ENCODE measurements at regions of chr19 and their contacts with region 1.

Region 1: GRCh38 chr19:36378625-36379509 is at the start of gene ZFP14:
- DNase-seq: peak; percentile 97
- ATAC-seq: peak; percentile 98
- H3K4me3 ChIP-seq: peak within 1 kb of the TSS; percentile 79 to 95 (median 85)
- H3K4me3 Mint-ChIP-seq: peak within 1 kb of the TSS; percentile 82
- H3K27ac ChIP-seq: peak within 1 kb of the TSS; percentile 83 to 94
- H3K27ac Mint-ChIP-seq: peak within 1 kb of the TSS; percentile 97
- H3K4me1 ChIP-seq: peaks cover 13 to 19% of the 10 kb centered on the region in 2 donors
- H3K4me1 Mint-ChIP-seq: peaks cover 19% of the 10 kb centered on the region
- H3K27me3 ChIP-seq: no peaks in the 10 kb centered on the region
- H3K27me3 Mint-ChIP-seq: no peaks in the 10 kb centered on the region
- CTCF ChIP-seq: peak; percentile 66
- total RNA-seq, gene ZFP14: 22.4 and 22.7 TPM in 2 replicates

Region 2: DNA sequence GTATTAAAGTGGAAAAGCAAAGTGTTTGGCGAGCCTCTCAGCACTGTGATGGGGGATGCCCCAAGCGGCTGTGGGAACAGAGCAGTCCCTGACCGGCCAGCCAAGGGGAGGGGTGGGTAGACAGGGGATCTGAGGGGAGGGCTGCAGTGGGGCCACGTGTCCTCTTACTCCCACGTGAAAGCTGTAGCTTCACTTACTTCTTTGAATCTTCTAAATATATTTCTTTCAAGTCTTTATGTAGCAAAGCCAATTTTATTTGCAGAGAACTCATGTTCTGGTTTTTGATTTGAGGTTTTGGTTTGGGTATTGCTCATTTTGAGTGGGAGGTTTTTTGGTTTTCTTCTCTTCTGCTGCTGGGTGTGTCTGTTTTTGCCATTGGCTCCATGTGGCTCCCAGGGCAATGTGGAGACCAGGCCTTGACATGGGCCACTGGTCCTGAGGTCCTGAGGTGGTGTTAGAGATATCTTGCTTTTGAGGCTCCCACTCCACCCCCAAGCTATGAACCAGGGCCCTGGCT is 285.7 kb before region 1 on chr19:
- CTCF ChIA-PET with region 1: no interaction called
- POLR2A ChIA-PET with region 1: no interaction called
- intact Hi-C with region 1: no loop called
- DNase-seq: no peak
- ATAC-seq: no peak
- H3K4me3 ChIP-seq: no peak overlapping the region
- H3K4me3 Mint-ChIP-seq: no peak overlapping the region
- H3K27ac ChIP-seq: no peak overlapping the region
- H3K27ac Mint-ChIP-seq: no peak overlapping the region
- H3K4me1 ChIP-seq: no peaks in the 10 kb centered on the region
- H3K4me1 Mint-ChIP-seq: no peaks in the 10 kb centered on the region
- H3K27me3 ChIP-seq: no peaks in the 10 kb centered on the region
- H3K27me3 Mint-ChIP-seq: no peaks in the 10 kb centered on the region
- CTCF ChIP-seq: no peak

Region 3: GRCh38 chr19:36214386-36215275 is 164.2 kb before region 1 on chr19 and contains the starts of genes ZNF146 and ZNF565:
- CTCF ChIA-PET with region 1: no interaction called
- POLR2A ChIA-PET with region 1: no interaction called
- intact Hi-C with region 1: loop called (anchors 1 kb)
- DNase-seq: peak; percentile 98
- ATAC-seq: peak; percentile 89
- H3K4me3 ChIP-seq: peak within 1 kb of the TSS; percentile 70 to 99 (median 85)
- H3K4me3 Mint-ChIP-seq: no peak within 1 kb of the TSS
- H3K27ac ChIP-seq: peak within 1 kb of the TSS; percentile 87 to 97
- H3K27ac Mint-ChIP-seq: peak within 1 kb of the TSS; percentile 41
- H3K4me1 ChIP-seq: peaks cover 13 to 21% of the 10 kb centered on the region in 2 donors
- H3K4me1 Mint-ChIP-seq: peaks cover 19% of the 10 kb centered on the region
- H3K27me3 ChIP-seq: no peaks in the 10 kb centered on the region
- H3K27me3 Mint-ChIP-seq: no peaks in the 10 kb centered on the region
- CTCF ChIP-seq: no peak
- total RNA-seq, gene ZNF146: 62.2 and 69.3 TPM in 2 replicates
- total RNA-seq, gene ZNF565: 5.2 and 5.5 TPM in 2 replicates

Region 4: GRCh38 chr19:36401475-36401874 is 22.6 kb after region 1 on chr19:
- CTCF ChIA-PET with region 1: interaction called, 3 read pairs
- POLR2A ChIA-PET with region 1: interaction called, 4 read pairs
- intact Hi-C with region 1: loop called (anchors 1 kb)
- DNase-seq: peak; percentile 74
- ATAC-seq: peak; percentile 90
- H3K4me3 ChIP-seq: peak overlapping the region; percentile 7 to 49 (median 42)
- H3K4me3 Mint-ChIP-seq: peak overlapping the region; percentile 75
- H3K27ac ChIP-seq: peak overlapping the region; percentile 63 to 80
- H3K27ac Mint-ChIP-seq: peak overlapping the region; percentile 81
- H3K4me1 ChIP-seq: peaks cover 19 to 20% of the 10 kb centered on the region in 2 donors
- H3K4me1 Mint-ChIP-seq: peaks cover 16% of the 10 kb centered on the region
- H3K27me3 ChIP-seq: no peaks in the 10 kb centered on the region
- H3K27me3 Mint-ChIP-seq: no peaks in the 10 kb centered on the region
- CTCF ChIP-seq: no peak

Region 5: DNA sequence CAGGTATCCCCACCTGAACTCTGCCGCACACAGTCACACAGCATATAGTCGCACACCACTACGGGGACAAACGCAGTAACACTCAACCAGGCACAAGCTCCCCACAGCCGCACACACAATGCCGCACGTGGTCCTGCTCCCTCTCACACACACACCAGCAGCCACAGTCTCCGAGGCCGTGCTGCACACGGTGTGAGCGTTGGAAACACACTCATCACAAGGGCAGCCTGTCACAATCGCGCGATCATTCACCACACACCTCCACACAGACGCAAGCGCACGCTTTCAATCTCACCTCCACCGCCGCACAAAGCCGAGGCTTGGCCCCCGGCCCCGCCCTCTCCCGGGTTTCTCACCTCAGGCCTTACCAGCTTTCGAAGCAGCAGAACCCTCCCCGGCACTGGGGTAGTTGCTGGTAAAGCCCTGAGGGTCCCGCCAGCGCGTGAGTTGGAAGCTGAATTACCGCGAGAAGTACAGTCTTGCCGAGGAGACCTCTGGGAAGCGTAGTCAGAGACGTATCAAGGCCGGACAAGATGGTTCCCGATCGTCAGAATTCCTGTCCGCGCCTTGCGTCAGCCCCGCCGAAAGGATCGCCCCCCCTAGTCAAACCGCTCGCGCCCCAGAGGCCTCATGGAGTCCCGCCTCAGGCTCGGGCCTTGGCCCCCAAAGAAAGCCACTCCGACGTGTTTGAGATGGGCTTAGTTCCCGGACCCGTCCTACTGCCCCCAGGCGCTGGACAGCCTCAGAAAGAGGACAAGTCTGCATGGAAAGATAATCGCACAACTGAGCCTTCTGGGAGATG is 110.5 kb after region 1 on chr19 and contains the start of gene ZNF566:
- CTCF ChIA-PET with region 1: interaction called, 13 read pairs
- POLR2A ChIA-PET with region 1: interaction called, 3 read pairs
- intact Hi-C with region 1: loop called (anchors 1 kb)
- DNase-seq: peak; percentile 96
- ATAC-seq: peak; percentile 90
- H3K4me3 ChIP-seq: peak within 1 kb of the TSS; percentile 79 to 98 (median 90)
- H3K4me3 Mint-ChIP-seq: peak within 1 kb of the TSS; percentile 99
- H3K27ac ChIP-seq: peak within 1 kb of the TSS; percentile 85 to 86
- H3K27ac Mint-ChIP-seq: peak within 1 kb of the TSS; percentile 99
- H3K4me1 ChIP-seq: peaks cover 16 to 30% of the 10 kb centered on the region in 2 donors
- H3K4me1 Mint-ChIP-seq: peaks cover 41% of the 10 kb centered on the region
- H3K27me3 ChIP-seq: no peaks in the 10 kb centered on the region
- H3K27me3 Mint-ChIP-seq: no peaks in the 10 kb centered on the region
- CTCF ChIP-seq: no peak
- total RNA-seq, gene ZNF566: 26.0 and 26.6 TPM in 2 replicates

Region 6: GRCh38 chr19:36665832-36666231 is 287.0 kb after region 1 on chr19:
- CTCF ChIA-PET with region 1: no interaction called
- POLR2A ChIA-PET with region 1: no interaction called
- intact Hi-C with region 1: loop called (anchors 5 kb)
- DNase-seq: peak; percentile 31
- ATAC-seq: no peak
- H3K4me3 ChIP-seq: peak overlapping the region; percentile 63 to 91 (median 80)
- H3K4me3 Mint-ChIP-seq: peak overlapping the region; percentile 98
- H3K27ac ChIP-seq: peak overlapping the region in 1 of 2 donors; percentile 81
- H3K27ac Mint-ChIP-seq: peak overlapping the region; percentile 90
- H3K4me1 ChIP-seq: peaks cover 15 to 19% of the 10 kb centered on the region in 2 donors
- H3K4me1 Mint-ChIP-seq: peaks cover 28% of the 10 kb centered on the region
- H3K27me3 ChIP-seq: no peaks in the 10 kb centered on the region
- H3K27me3 Mint-ChIP-seq: no peaks in the 10 kb centered on the region
- CTCF ChIP-seq: no peak

Region 7: GRCh38 chr19:36850559-36851442 is 471.9 kb after region 1 on chr19 and contains the start of gene ZNF345:
- CTCF ChIA-PET with region 1: no interaction called
- POLR2A ChIA-PET with region 1: no interaction called
- intact Hi-C with region 1: loop called (anchors 2 kb)
- DNase-seq: peak; percentile 93
- ATAC-seq: peak; percentile 82
- H3K4me3 ChIP-seq: peak within 1 kb of the TSS; percentile 92 to 100 (median 93)
- H3K4me3 Mint-ChIP-seq: no peak within 1 kb of the TSS
- H3K27ac ChIP-seq: peak within 1 kb of the TSS; percentile 74 to 84
- H3K27ac Mint-ChIP-seq: no peak within 1 kb of the TSS
- H3K4me1 ChIP-seq: peaks cover 16 to 20% of the 10 kb centered on the region in 2 donors
- H3K4me1 Mint-ChIP-seq: peaks cover 5% of the 10 kb centered on the region
- H3K27me3 ChIP-seq: no peaks in the 10 kb centered on the region
- H3K27me3 Mint-ChIP-seq: no peaks in the 10 kb centered on the region
- CTCF ChIP-seq: no peak
- total RNA-seq, gene ZNF345: 17.7 and 19.5 TPM in 2 replicates

Measured in B cell (primary cell).